CD8-positive, alpha-beta memory T cell (primary cell): ENCODE measurements at regions of chr2 and their contacts with region 1.

Region 1: DNA sequence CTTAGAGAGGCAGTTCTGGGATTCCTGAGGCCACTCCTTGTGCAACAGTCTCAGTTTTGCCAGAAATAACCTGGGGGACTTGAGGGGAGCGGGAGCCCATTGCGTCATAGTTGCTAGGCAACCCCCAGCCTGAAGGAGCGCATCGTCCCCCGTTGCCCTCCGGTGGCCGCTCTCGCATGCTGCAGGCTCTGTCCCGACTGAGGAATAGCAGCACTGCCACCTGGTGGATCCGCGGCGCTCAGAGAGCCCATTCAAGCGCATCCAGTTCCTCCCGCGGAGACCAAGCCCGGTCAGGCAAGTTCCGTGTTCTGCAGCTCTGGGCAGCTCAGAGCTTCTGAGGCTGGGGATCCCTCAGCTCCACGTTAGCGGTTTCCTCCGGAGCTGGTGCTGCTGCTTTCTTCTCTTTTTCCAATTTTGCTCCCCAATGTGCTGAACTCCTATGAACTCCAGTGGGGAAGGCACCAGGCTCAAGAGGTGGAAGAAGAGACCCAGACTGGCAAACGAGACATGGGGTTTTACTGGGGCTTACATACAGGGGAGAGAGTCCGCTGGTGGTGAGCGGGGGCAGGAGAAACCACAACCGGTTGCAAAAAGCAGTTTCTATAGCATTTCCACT is 15.1 kb downstream of the SLC4A3 start:
- DNase-seq: peak; percentile 80 to 91 (median 83)
- H3K4me3 ChIP-seq: no peak overlapping the region
- H3K4me3 Mint-ChIP-seq: no peak overlapping the region
- H3K27ac ChIP-seq: no peak overlapping the region
- H3K27ac Mint-ChIP-seq: peak overlapping the region in 5 of 8 donors; percentile 4 to 68 (median 42)
- H3K4me1 ChIP-seq: no peaks in the 10 kb centered on the region
- H3K4me1 Mint-ChIP-seq: peaks cover 4 to 11% (median 7%) of the 10 kb centered on the region in 3 donors
- H3K27me3 ChIP-seq: no peaks in the 10 kb centered on the region
- H3K27me3 Mint-ChIP-seq: peaks cover 26 to 43% of the 10 kb centered on the region in 2 donors

Region 2: GRCh38 chr2:219543601-219544358 is 98.8 kb before region 1 on chr2 and contains the starts of genes CHPF and TMEM198:
- CTCF ChIA-PET with region 1: interaction called, 10 read pairs
- POLR2A ChIA-PET with region 1: no interaction called
- DNase-seq: peak; percentile 84 to 94 (median 88)
- H3K4me3 ChIP-seq: peak within 1 kb of the TSS; percentile 81
- H3K4me3 Mint-ChIP-seq: peak within 1 kb of the TSS; percentile 81 to 94 (median 86)
- H3K27ac ChIP-seq: peak within 1 kb of the TSS; percentile 69
- H3K27ac Mint-ChIP-seq: peak within 1 kb of the TSS; percentile 73 to 92 (median 86)
- H3K4me1 ChIP-seq: peaks cover 18% of the 10 kb centered on the region
- H3K4me1 Mint-ChIP-seq: peaks cover 22 to 30% (median 27%) of the 10 kb centered on the region in 3 donors
- H3K27me3 ChIP-seq: no peaks in the 10 kb centered on the region
- H3K27me3 Mint-ChIP-seq: peaks cover 4 to 14% of the 10 kb centered on the region in 2 donors
- total RNA-seq, gene CHPF: 32.9 to 36.5 TPM
- total RNA-seq, gene TMEM198: 5.2 to 6.0 TPM